ENCODE measurements at regions of chr2 and their contacts with region 1.

Region 1: GRCh38 chr2:102063941-102064678 is 72.3 kb downstream of the IL1R2 start:
- DNase-seq: peak; percentile 81
- H3K4me3 Mint-ChIP-seq: no peak overlapping the region
- H3K27ac Mint-ChIP-seq: peak overlapping the region; percentile 88
- H3K4me1 Mint-ChIP-seq: peaks cover 44% of the 10 kb centered on the region
- H3K27me3 Mint-ChIP-seq: peaks cover 6% of the 10 kb centered on the region

Region 2: DNA sequence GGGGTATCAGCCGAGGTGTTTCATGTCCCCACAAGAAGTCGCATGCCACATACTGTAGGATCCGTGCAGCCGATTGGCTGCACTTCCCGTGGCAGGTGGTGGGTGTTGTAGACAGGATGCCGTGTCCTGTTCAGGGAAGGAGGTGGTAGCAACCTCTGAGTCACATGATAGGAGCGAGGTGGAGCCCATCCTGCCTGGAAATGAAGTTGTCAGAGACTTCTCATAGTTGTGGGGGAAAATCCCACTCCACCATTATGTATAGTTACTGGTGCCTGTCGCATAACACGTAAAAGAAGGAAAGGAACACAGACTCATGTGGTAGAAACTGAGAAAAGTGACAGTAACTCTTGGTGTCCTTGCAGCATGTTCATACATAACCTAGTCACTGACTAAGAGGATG is 163.7 kb before region 1 on chr2:
- CTCF ChIA-PET with region 1: interaction called, 4 read pairs
- POLR2A ChIA-PET with region 1: no interaction called
- intact Hi-C with region 1: loop called (anchors 1 kb)
- DNase-seq: peak; percentile 88
- H3K4me3 Mint-ChIP-seq: peak overlapping the region; percentile 56
- H3K27ac Mint-ChIP-seq: peak overlapping the region; percentile 93
- H3K4me1 Mint-ChIP-seq: peaks cover 40% of the 10 kb centered on the region
- H3K27me3 Mint-ChIP-seq: peaks cover 15% of the 10 kb centered on the region

Region 3: GRCh38 chr2:102027036-102027980 is 36.8 kb before region 1 on chr2:
- CTCF ChIA-PET with region 1: interaction called, 3 read pairs
- POLR2A ChIA-PET with region 1: interaction called, 5 read pairs
- intact Hi-C with region 1: loop called (anchors 1 kb)
- DNase-seq: no peak
- H3K4me3 Mint-ChIP-seq: no peak overlapping the region
- H3K27ac Mint-ChIP-seq: peak overlapping the region; percentile 63
- H3K4me1 Mint-ChIP-seq: peaks cover 64% of the 10 kb centered on the region
- H3K27me3 Mint-ChIP-seq: no peaks in the 10 kb centered on the region

Region 4: DNA sequence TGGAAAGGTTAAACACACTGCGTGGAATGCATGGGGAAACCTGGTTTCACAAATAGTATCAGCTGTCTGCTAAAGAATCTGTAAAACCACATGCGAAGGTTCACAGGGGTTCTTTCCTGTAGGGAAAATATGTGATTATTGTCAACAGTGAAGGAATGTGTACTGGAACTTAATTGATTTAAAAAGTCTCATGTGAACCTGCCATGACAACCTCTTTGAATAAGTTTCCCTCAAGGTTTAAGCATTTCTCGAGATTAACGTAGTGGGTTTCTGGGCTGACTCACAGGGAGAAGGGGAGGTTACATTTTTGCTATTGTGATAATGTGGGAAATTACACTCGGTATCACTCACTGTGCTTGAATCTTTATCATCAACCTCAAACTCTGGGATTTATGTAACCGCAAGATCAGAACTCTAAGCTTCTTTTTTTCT is 50.2 kb after region 1 on chr2:
- CTCF ChIA-PET with region 1: no interaction called
- POLR2A ChIA-PET with region 1: interaction called, 6 read pairs
- intact Hi-C with region 1: loop called (anchors 1 kb)
- DNase-seq: peak; percentile 58
- H3K4me3 Mint-ChIP-seq: no peak overlapping the region
- H3K27ac Mint-ChIP-seq: peak overlapping the region; percentile 59
- H3K4me1 Mint-ChIP-seq: peaks cover 73% of the 10 kb centered on the region
- H3K27me3 Mint-ChIP-seq: peaks cover 12% of the 10 kb centered on the region

Region 5: GRCh38 chr2:102166189-102166845 is 102.2 kb after region 1 on chr2:
- CTCF ChIA-PET with region 1: no interaction called
- POLR2A ChIA-PET with region 1: no interaction called
- intact Hi-C with region 1: loop called (anchors 1 kb)
- DNase-seq: no peak
- H3K4me3 Mint-ChIP-seq: no peak overlapping the region
- H3K27ac Mint-ChIP-seq: no peak overlapping the region
- H3K4me1 Mint-ChIP-seq: peaks cover 5% of the 10 kb centered on the region
- H3K27me3 Mint-ChIP-seq: no peaks in the 10 kb centered on the region